ENCODE measurements at regions of chr5 and their contacts with region 1.

Region 1: DNA sequence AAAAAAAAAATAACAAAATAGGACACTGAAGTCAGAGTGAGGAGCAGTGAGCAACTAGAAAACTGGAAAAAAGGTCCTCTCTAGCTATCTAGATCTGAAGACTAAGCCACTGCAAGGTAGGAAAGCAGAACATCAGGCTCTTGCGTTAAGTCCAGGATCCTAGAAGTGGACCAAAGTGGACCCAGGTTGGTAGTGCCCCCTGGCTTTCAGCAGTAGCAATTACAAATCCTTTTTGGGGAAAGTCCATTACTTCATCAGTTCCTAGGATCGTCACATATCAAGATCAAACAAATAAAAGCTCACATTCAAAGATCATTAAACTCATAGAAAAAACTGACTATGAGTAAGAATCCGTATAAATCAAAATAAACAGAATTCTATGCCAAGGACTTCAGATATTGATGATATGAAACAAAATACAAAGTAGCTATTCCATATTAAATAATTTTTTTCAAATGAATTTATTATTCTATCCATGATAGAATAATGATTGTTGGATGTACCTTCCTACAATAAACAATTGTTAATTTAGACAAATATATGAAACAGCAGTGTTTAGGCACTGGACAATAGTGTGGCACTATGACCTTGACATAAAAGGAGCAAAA is 6.5 kb upstream of the RICTOR start:
- H3K4me3 ChIP-seq: no peak overlapping the region
- H3K27ac ChIP-seq: no peak overlapping the region
- H3K4me1 ChIP-seq: peaks cover 8% of the 10 kb centered on the region; the same call in 1 of the 2 replicates
- CTCF ChIP-seq: peak; percentile 52

Region 2: DNA sequence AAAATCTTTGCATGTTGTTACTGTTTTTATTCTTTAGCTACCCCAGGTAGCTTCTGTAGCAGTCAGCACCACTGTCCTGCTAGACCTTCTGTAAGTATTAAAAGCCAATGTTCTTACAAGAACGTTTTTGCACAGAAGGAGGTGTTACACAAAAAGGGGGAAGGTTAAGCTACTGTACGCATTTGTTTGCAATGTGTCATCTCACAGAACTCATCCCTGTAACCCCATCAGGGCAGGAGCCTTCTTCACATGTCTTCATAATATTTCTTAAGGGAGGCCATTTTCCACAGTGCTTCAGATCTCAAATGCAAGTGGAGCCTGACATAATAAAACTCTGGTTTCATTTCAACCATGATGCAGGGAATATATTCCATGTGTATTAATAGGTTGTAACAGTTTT is 167.0 kb before region 1 on chr5:
- CTCF ChIA-PET with region 1: no interaction called
- POLR2A ChIA-PET with region 1: no interaction called
- H3K4me3 ChIP-seq: no peak overlapping the region
- H3K27ac ChIP-seq: no peak overlapping the region
- H3K4me1 ChIP-seq: no peaks in the 10 kb centered on the region
- CTCF ChIP-seq: no peak

Region 3: DNA sequence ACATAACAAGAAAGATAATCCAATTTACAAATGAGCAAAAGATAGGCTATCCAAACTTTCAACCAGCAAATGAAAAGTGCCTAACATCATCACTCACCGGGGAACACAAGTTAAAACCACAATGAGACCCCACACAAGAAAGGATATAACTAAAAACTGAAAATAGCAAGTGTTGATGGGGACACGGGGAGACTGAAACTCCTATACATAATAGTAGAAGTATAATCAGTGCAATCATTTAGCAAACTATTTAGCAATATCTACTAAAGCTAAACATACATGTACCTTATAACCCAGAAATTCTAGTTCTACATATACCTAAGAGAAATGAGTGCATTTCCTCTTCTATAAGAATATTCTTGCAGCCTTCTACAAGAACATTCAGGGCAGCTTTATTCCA is 79.0 kb before region 1 on chr5:
- CTCF ChIA-PET with region 1: interaction called, 19 read pairs
- POLR2A ChIA-PET with region 1: no interaction called
- H3K4me3 ChIP-seq: no peak overlapping the region
- H3K27ac ChIP-seq: no peak overlapping the region
- H3K4me1 ChIP-seq: no peaks in the 10 kb centered on the region
- CTCF ChIP-seq: no peak

Region 4: GRCh38 chr5:39062530-39062929 is 18.2 kb before region 1 on chr5:
- CTCF ChIA-PET with region 1: interaction called, 14 read pairs
- POLR2A ChIA-PET with region 1: no interaction called
- H3K4me3 ChIP-seq: no peak overlapping the region
- H3K27ac ChIP-seq: no peak overlapping the region
- H3K4me1 ChIP-seq: peaks cover 8% of the 10 kb centered on the region
- CTCF ChIP-seq: no peak

Region 5: GRCh38 chr5:39092581-39093350 is 12.1 kb after region 1 on chr5:
- CTCF ChIA-PET with region 1: interaction called, 46 read pairs
- POLR2A ChIA-PET with region 1: no interaction called
- H3K4me3 ChIP-seq: no peak overlapping the region
- H3K27ac ChIP-seq: peak overlapping the region; percentile 2; the same call in 1 of the 2 replicates
- H3K4me1 ChIP-seq: no peaks in the 10 kb centered on the region; the same call in 1 of the 2 replicates
- CTCF ChIP-seq: no peak

Region 6: GRCh38 chr5:39099416-39099815 is 18.7 kb after region 1 on chr5:
- CTCF ChIA-PET with region 1: interaction called, 30 read pairs
- POLR2A ChIA-PET with region 1: no interaction called
- H3K4me3 ChIP-seq: no peak overlapping the region
- H3K27ac ChIP-seq: no peak overlapping the region
- H3K4me1 ChIP-seq: no peaks in the 10 kb centered on the region
- CTCF ChIP-seq: no peak

Region 7: GRCh38 chr5:39106322-39106721 is 25.6 kb after region 1 on chr5:
- CTCF ChIA-PET with region 1: interaction called, 21 read pairs
- POLR2A ChIA-PET with region 1: no interaction called
- H3K4me3 ChIP-seq: no peak overlapping the region
- H3K27ac ChIP-seq: no peak overlapping the region
- H3K4me1 ChIP-seq: no peaks in the 10 kb centered on the region
- CTCF ChIP-seq: no peak

Region 8: DNA sequence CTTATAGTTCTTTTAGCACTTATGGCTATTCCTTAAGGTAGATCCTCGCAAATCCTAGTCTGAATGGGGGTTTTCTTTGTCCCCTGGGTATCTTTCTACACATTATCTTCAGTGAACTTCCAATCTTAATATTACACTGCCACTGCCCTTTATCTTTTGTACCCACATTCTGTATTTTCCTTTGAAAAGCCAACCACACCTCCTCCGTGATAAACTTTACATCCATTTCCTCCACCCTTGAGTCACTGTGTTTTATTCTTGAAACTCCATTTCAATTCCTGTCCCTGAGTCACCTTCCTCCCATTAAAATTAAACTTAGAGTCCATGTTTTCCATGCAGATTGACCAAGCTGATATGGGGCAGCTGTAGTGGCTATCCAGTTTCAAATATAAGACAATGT is 36.7 kb after region 1 on chr5:
- CTCF ChIA-PET with region 1: interaction called, 12 read pairs
- POLR2A ChIA-PET with region 1: no interaction called
- H3K4me3 ChIP-seq: no peak overlapping the region
- H3K27ac ChIP-seq: no peak overlapping the region
- H3K4me1 ChIP-seq: 0 out of 2 replicates have a peak, but pooled peaks cover 3% of the 10 kb centered on the region
- CTCF ChIP-seq: no peak